ENCODE measurements at regions of chr1 and their contacts with region 1.

Region 1: DNA sequence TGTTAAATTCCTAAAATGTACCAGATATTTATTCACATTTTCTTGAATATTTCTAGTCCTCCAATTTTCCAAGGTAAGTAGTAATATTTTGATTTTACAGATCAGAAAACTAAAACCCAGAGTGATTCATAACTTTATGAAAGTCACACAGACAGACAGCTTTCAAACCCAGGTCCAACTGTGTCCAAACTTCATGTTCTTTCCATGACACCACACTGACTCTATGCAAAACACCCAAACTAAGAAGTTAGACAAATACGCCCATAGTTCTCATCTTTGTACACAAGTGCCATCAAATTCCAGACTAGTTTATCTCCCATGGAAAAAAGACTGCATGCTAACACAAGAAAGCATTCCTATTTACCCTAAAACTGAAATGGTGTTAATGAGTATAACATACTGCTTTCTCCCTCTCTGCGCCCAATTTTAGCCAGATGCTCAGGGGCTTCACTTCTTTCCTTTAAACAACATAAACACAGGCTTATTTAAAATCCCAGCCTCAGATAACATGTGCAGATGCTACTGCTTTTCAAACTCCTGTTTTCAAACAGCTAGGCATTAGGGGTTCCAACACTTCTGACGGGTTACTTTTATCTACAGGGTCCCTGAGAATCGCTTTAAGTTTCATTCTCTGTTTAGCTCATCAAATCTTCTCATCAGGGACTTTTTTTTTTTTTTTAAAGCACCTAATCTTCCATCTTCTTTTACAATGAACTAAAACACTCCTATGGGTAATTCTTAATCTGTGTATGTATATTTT is 44.6 kb downstream of the WASF2 start:
- DNase-seq: peak; percentile 31
- H3K4me3 ChIP-seq: peak overlapping the region; percentile 32
- H3K27ac ChIP-seq: peak overlapping the region; percentile 12
- H3K4me1 ChIP-seq: peaks cover 60% of the 10 kb centered on the region
- CTCF ChIP-seq: no peak

Region 2: DNA sequence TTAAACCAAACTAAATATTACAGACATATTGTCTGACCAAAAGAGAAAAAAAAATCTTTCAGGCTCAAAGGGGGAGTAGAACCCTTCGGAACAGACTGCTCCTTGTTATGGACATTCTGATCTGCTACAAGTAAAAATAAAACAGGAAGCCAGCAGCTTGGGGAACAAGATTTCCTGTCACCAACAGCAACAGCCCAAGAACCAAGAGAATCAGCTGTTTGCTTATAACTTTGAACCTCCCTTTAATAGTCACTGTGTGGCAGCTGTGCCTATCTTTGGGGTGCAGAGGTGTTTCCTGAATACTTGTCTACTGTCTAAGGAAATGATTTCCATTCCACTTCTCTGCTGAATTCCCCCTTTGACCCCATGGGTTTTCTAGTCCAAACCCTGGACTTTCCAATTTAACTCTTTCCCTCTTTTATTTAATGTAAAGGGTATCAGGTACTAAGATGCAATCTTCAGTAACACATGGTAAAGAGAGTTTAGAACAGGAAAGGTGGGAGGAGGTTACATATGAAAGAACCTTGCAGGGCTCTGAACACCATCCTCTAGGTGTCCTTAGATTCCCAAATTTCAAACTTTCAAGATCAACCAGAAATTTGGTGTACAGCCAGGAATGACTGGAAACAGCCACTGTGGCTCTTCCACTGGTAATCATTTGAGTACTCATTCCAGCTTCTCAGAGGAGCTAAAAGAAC is 14.3 kb before region 1 on chr1:
- CTCF ChIA-PET with region 1: no interaction called
- POLR2A ChIA-PET with region 1: interaction called, 24 read pairs
- intact Hi-C with region 1: no loop called
- DNase-seq: peak; percentile 69
- H3K4me3 ChIP-seq: peak overlapping the region; percentile 47
- H3K27ac ChIP-seq: peak overlapping the region; percentile 74
- H3K4me1 ChIP-seq: peaks cover 100% of the 10 kb centered on the region
- CTCF ChIP-seq: no peak

Region 3: GRCh38 chr1:27915082-27915598 is 469.8 kb after region 1 on chr1:
- CTCF ChIA-PET with region 1: no interaction called
- POLR2A ChIA-PET with region 1: no interaction called
- intact Hi-C with region 1: no loop called
- DNase-seq: no peak
- H3K4me3 ChIP-seq: peak overlapping the region; percentile 27
- H3K27ac ChIP-seq: no peak overlapping the region
- H3K4me1 ChIP-seq: peaks cover 20% of the 10 kb centered on the region
- CTCF ChIP-seq: no peak

Measured in OCI-LY7 (cell line).